ENCODE measurements at regions of chr4 and their contacts with region 1.

Region 1: DNA sequence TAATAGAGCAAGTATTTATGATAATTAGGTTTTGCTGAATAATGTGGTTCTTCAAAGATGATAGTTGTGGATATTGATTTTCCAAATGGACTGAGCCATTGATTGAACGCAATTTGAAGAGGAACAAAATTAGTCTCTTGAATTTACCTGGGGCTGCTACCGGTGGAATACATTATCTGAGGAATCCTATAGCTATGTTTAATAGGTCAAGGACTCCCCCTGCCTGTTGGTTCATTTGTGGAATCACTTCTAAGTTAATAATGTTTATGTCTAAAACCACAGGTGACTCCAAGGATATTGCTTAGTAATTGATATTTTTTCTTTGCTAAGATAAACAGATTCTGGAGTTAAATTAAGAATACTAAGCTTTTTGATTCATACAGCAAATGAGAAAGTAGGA is 576.0 kb upstream of the PABPC4L start:
- DNase-seq: peak; percentile 6
- ATAC-seq: peak; percentile 47; the same call in 1 of the 2 replicates
- H3K4me3 ChIP-seq: no peak overlapping the region
- H3K27ac ChIP-seq: no peak overlapping the region
- H3K4me1 ChIP-seq: no peaks in the 10 kb centered on the region
- H3K27me3 ChIP-seq: no peaks in the 10 kb centered on the region
- CTCF ChIP-seq: peak in 2 of 3 experiments; percentile 6 to 36; a peak in 2 of 6 replicates
- POLR2A ChIP-seq: no peak
- RAD21 ChIP-seq: peak; percentile 57

Region 2: DNA sequence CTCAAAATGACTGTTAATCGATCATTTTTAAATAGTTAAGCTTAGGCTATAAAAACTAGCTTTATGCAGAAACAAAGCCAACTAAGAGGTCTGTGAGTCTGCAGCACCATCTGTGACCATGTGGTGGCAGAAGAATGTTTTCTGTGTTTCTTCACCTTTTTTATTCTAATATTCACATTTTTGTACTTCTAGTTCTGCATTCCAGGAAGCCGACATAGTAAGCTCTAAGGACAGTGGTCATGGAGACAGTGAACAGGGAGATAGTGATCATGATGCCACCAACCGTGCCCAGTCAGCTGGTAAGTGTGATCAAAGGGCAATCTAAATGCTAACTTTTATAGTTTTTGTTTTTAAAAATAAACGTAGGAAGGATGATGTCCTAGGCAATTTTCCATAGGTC is 1622.9 kb before region 1 on chr4:
- CTCF ChIA-PET with region 1: interaction called, 8 read pairs
- POLR2A ChIA-PET with region 1: no interaction called
- RAD21 ChIA-PET with region 1: no interaction called
- intact Hi-C with region 1: loop called (anchors 10 kb)
- DNase-seq: peak; percentile 23
- ATAC-seq: peak; percentile 57
- H3K4me3 ChIP-seq: no peak overlapping the region
- H3K27ac ChIP-seq: no peak overlapping the region
- H3K4me1 ChIP-seq: no peaks in the 10 kb centered on the region
- H3K27me3 ChIP-seq: no peaks in the 10 kb centered on the region
- CTCF ChIP-seq: peak; percentile 23 to 67 (median 62); a peak in 5 of 6 replicates
- POLR2A ChIP-seq: no peak
- RAD21 ChIP-seq: peak; percentile 67

Region 3: GRCh38 chr4:134024251-134024650 is 753.4 kb before region 1 on chr4:
- CTCF ChIA-PET with region 1: interaction called, 5 read pairs
- POLR2A ChIA-PET with region 1: no interaction called
- RAD21 ChIA-PET with region 1: interaction called in 1 of 2 experiments, 3 read pairs
- intact Hi-C with region 1: loop called (anchors 5 kb)
- DNase-seq: peak; percentile 34
- ATAC-seq: peak; percentile 79
- H3K4me3 ChIP-seq: no peak overlapping the region
- H3K27ac ChIP-seq: no peak overlapping the region
- H3K4me1 ChIP-seq: 0 out of 4 replicates have a peak, but pooled peaks cover 0 to 4% of the 10 kb centered on the region in 2 experiments
- H3K27me3 ChIP-seq: no peaks in the 10 kb centered on the region
- CTCF ChIP-seq: peak; percentile 23 to 56 (median 53); a peak in 5 of 6 replicates
- POLR2A ChIP-seq: no peak
- RAD21 ChIP-seq: peak; percentile 48

Measured in HCT116 (cell line).